Natural killer cell (primary cell): ENCODE measurements at regions of chr9 and their contacts with region 1.

Region 1: GRCh38 chr9:76458903-76459690 is at the start of gene GCNT1:
- DNase-seq: peak; percentile 81 to 92
- ATAC-seq: peak; percentile 95 to 98 (median 96)
- H3K4me3 ChIP-seq: peak within 1 kb of the TSS; percentile 88
- H3K4me3 Mint-ChIP-seq: peak within 1 kb of the TSS; percentile 91
- H3K27ac ChIP-seq: peak within 1 kb of the TSS; percentile 39
- H3K27ac Mint-ChIP-seq: peak within 1 kb of the TSS; percentile 72 to 83
- H3K4me1 ChIP-seq: peaks cover 29% of the 10 kb centered on the region
- H3K4me1 Mint-ChIP-seq: peaks cover 24 to 33% of the 10 kb centered on the region in 2 donors
- H3K27me3 ChIP-seq: no peaks in the 10 kb centered on the region
- H3K27me3 Mint-ChIP-seq: no peaks in the 10 kb centered on the region
- CTCF ChIP-seq: no peak
- total RNA-seq, gene GCNT1: 8.6 to 23.7 (median 18.5) TPM

Region 2: GRCh38 chr9:76393963-76394679 is 65.0 kb before region 1 on chr9 and contains the start of gene RFK:
- intact Hi-C with region 1: loop called (anchors 5 kb)
- DNase-seq: peak; percentile 94 to 95
- ATAC-seq: peak; percentile 88 to 98 (median 91)
- H3K4me3 ChIP-seq: peak within 1 kb of the TSS; percentile 99
- H3K4me3 Mint-ChIP-seq: peak within 1 kb of the TSS; percentile 100
- H3K27ac ChIP-seq: peak within 1 kb of the TSS; percentile 90
- H3K27ac Mint-ChIP-seq: peak within 1 kb of the TSS; percentile 98 to 99
- H3K4me1 ChIP-seq: peaks cover 15% of the 10 kb centered on the region
- H3K4me1 Mint-ChIP-seq: peaks cover 12% of the 10 kb centered on the region in 2 donors
- H3K27me3 ChIP-seq: no peaks in the 10 kb centered on the region
- H3K27me3 Mint-ChIP-seq: no peaks in the 10 kb centered on the region
- CTCF ChIP-seq: peak; percentile 41
- total RNA-seq, gene RFK: 8.7 to 11.5 (median 9.2) TPM